Esophagus squamous epithelium (tissue), 5 donors: ENCODE measurements at regions of chr1 and their contacts with region 1.

Region 1: GRCh38 chr1:115768549-115768948 is at the start of gene CASQ2:
- DNase-seq: no peak
- H3K4me3 ChIP-seq: peak within 1 kb of the TSS in 3 of 4 donors; percentile 27 to 52 (median 28)
- H3K27ac ChIP-seq: peak within 1 kb of the TSS; percentile 23 to 75 (median 75)
- H3K4me1 ChIP-seq: peaks cover 0 to 20% (median 5%) of the 10 kb centered on the region in 3 donors
- H3K27me3 ChIP-seq: no peaks in the 10 kb centered on the region
- CTCF ChIP-seq: no peak
- POLR2A ChIP-seq: peak in 1 of 4 donors; percentile 54
- total RNA-seq, gene CASQ2: 0.53 to 21.4 (median 4.1) TPM

Region 2: GRCh38 chr1:115411371-115412063 is 357.0 kb before region 1 on chr1:
- intact Hi-C with region 1: no loop called
- DNase-seq: no peak
- H3K4me3 ChIP-seq: no peak overlapping the region
- H3K27ac ChIP-seq: peak overlapping the region in 1 of 4 donors; percentile 0
- H3K4me1 ChIP-seq: peaks cover 0 to 29% (median 0%) of the 10 kb centered on the region in 3 donors
- H3K27me3 ChIP-seq: peaks cover 0 to 16% (median 0%) of the 10 kb centered on the region in 4 donors
- CTCF ChIP-seq: no peak
- POLR2A ChIP-seq: no peak

Region 3: GRCh38 chr1:115717541-115717940 is 51.0 kb before region 1 on chr1:
- intact Hi-C with region 1: loop called (anchors 5 kb)
- DNase-seq: no peak
- H3K4me3 ChIP-seq: no peak overlapping the region
- H3K27ac ChIP-seq: no peak overlapping the region
- H3K4me1 ChIP-seq: peaks cover 8 to 29% (median 17%) of the 10 kb centered on the region in 3 donors
- H3K27me3 ChIP-seq: no peaks in the 10 kb centered on the region
- CTCF ChIP-seq: peak in 5 of 6 experiments; percentile 39 to 57 (median 54)
- POLR2A ChIP-seq: no peak

Region 4: GRCh38 chr1:115958866-115959265 is 190.3 kb after region 1 on chr1:
- intact Hi-C with region 1: no loop called
- DNase-seq: no peak
- H3K4me3 ChIP-seq: no peak overlapping the region
- H3K27ac ChIP-seq: no peak overlapping the region
- H3K4me1 ChIP-seq: peaks cover 0 to 17% (median 0%) of the 10 kb centered on the region in 3 donors
- H3K27me3 ChIP-seq: no peaks in the 10 kb centered on the region
- CTCF ChIP-seq: no peak
- POLR2A ChIP-seq: no peak